Activated CD8-positive, alpha-beta T cell treated with anti-CD3 and anti-CD28 coated beads for 36 hours (primary cell): ENCODE measurements at regions of chr2 and their contacts with region 1.

Region 1: GRCh38 chr2:33210626-33211025 is 263.9 kb downstream of the LTBP1 start:
- DNase-seq: no peak
- ATAC-seq: no peak
- H3K4me3 Mint-ChIP-seq: no peak overlapping the region
- H3K27ac Mint-ChIP-seq: no peak overlapping the region
- H3K4me1 Mint-ChIP-seq: no peaks in the 10 kb centered on the region
- H3K27me3 Mint-ChIP-seq: no peaks in the 10 kb centered on the region
- CTCF ChIP-seq: no peak

Region 2: GRCh38 chr2:33197198-33197938 is 13.3 kb before region 1 on chr2:
- CTCF ChIA-PET with region 1: no interaction called
- POLR2A ChIA-PET with region 1: no interaction called
- intact Hi-C with region 1: no loop called
- DNase-seq: no peak
- ATAC-seq: no peak
- H3K4me3 Mint-ChIP-seq: no peak overlapping the region
- H3K27ac Mint-ChIP-seq: no peak overlapping the region
- H3K4me1 Mint-ChIP-seq: no peaks in the 10 kb centered on the region
- H3K27me3 Mint-ChIP-seq: peaks cover 6% of the 10 kb centered on the region
- CTCF ChIP-seq: no peak

Region 3: GRCh38 chr2:33372940-33373553 is 162.4 kb after region 1 on chr2:
- CTCF ChIA-PET with region 1: interaction called, 8 read pairs
- POLR2A ChIA-PET with region 1: no interaction called
- intact Hi-C with region 1: loop called (anchors 5 kb)
- DNase-seq: peak; percentile 30
- ATAC-seq: no peak
- H3K4me3 Mint-ChIP-seq: no peak overlapping the region
- H3K27ac Mint-ChIP-seq: no peak overlapping the region
- H3K4me1 Mint-ChIP-seq: no peaks in the 10 kb centered on the region
- H3K27me3 Mint-ChIP-seq: no peaks in the 10 kb centered on the region
- CTCF ChIP-seq: peak; percentile 82